ENCODE measurements at regions of chr10 and their contacts with region 1.

Region 1: GRCh38 chr10:94320285-94320914 is 42.3 kb downstream of the NOC3L start:
- DNase-seq: peak; percentile 75
- ATAC-seq: peak; percentile 69
- H3K4me3 Mint-ChIP-seq: no peak overlapping the region
- H3K27ac Mint-ChIP-seq: no peak overlapping the region
- H3K4me1 Mint-ChIP-seq: no peaks in the 10 kb centered on the region
- H3K27me3 Mint-ChIP-seq: no peaks in the 10 kb centered on the region

Region 2: GRCh38 chr10:93916257-93917063 is 403.9 kb before region 1 on chr10:
- CTCF ChIA-PET with region 1: interaction called, 13 read pairs
- POLR2A ChIA-PET with region 1: no interaction called
- DNase-seq: no peak
- ATAC-seq: no peak
- H3K4me3 Mint-ChIP-seq: no peak overlapping the region
- H3K27ac Mint-ChIP-seq: no peak overlapping the region
- H3K4me1 Mint-ChIP-seq: no peaks in the 10 kb centered on the region
- H3K27me3 Mint-ChIP-seq: no peaks in the 10 kb centered on the region

Region 3: DNA sequence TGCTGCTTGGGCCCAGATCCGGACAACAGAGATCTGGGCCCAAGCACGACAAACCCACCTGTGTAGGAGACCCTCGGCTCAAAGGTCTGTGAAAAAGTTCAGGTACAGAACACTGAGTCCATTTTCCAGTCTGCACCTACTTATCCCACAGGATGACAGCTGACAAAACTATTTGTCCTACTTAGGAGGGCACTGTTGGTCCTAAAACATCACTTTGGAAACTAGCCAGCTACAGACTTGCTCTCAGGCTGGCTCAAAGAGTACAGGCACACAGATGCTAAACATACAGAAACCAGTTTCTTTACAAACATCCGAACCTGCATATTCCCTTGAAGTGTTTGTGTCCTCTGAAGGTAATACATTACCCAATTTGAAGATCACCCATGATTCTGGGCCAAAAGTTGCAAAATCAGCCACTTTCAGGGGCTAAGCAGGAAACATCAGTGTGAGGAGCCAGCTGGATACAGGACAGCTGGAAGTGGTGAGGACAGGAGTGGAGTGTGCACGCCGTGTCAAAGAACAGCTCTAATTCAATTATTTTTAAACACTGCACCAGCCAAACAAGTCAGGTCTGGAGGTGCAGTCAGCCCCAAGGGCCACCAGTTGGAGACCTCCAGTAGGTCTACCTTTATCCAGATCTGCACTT is 46.1 kb before region 1 on chr10:
- CTCF ChIA-PET with region 1: interaction called, 23 read pairs
- POLR2A ChIA-PET with region 1: no interaction called
- DNase-seq: no peak
- ATAC-seq: no peak
- H3K4me3 Mint-ChIP-seq: no peak overlapping the region
- H3K27ac Mint-ChIP-seq: no peak overlapping the region
- H3K4me1 Mint-ChIP-seq: no peaks in the 10 kb centered on the region
- H3K27me3 Mint-ChIP-seq: peaks cover 4% of the 10 kb centered on the region

Region 4: GRCh38 chr10:94279835-94280709 is 40.3 kb before region 1 on chr10:
- CTCF ChIA-PET with region 1: interaction called, 23 read pairs
- POLR2A ChIA-PET with region 1: no interaction called
- DNase-seq: peak; percentile 66
- ATAC-seq: peak; percentile 82
- H3K4me3 Mint-ChIP-seq: no peak overlapping the region
- H3K27ac Mint-ChIP-seq: no peak overlapping the region
- H3K4me1 Mint-ChIP-seq: no peaks in the 10 kb centered on the region
- H3K27me3 Mint-ChIP-seq: peaks cover 24% of the 10 kb centered on the region

Region 5: GRCh38 chr10:94310369-94310768 is 10.0 kb before region 1 on chr10:
- CTCF ChIA-PET with region 1: interaction called, 20 read pairs
- POLR2A ChIA-PET with region 1: no interaction called
- DNase-seq: no peak
- ATAC-seq: no peak
- H3K4me3 Mint-ChIP-seq: no peak overlapping the region
- H3K27ac Mint-ChIP-seq: no peak overlapping the region
- H3K4me1 Mint-ChIP-seq: peaks cover 2% of the 10 kb centered on the region
- H3K27me3 Mint-ChIP-seq: peaks cover 18% of the 10 kb centered on the region

Region 6: DNA sequence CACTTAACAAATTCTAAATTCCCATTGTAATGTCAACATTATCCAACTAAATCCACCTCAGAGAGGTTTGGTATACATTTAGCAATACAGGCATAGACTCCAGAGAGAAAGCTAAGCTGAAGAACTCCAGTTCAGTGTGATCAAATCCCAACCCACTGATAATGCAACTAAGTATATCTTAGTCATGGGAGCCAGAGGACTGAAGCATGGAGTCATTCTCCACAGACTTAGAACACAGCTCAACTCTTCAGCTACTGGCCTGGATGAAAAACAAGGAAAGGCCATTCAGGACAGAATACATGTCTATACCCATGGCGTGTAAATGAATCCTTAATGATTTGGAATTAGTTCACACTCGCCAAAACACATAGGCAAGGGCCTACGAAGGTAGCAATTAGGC is 14.5 kb after region 1 on chr10:
- CTCF ChIA-PET with region 1: interaction called, 36 read pairs
- POLR2A ChIA-PET with region 1: no interaction called
- DNase-seq: no peak
- ATAC-seq: no peak
- H3K4me3 Mint-ChIP-seq: no peak overlapping the region
- H3K27ac Mint-ChIP-seq: no peak overlapping the region
- H3K4me1 Mint-ChIP-seq: no peaks in the 10 kb centered on the region
- H3K27me3 Mint-ChIP-seq: no peaks in the 10 kb centered on the region

Region 7: DNA sequence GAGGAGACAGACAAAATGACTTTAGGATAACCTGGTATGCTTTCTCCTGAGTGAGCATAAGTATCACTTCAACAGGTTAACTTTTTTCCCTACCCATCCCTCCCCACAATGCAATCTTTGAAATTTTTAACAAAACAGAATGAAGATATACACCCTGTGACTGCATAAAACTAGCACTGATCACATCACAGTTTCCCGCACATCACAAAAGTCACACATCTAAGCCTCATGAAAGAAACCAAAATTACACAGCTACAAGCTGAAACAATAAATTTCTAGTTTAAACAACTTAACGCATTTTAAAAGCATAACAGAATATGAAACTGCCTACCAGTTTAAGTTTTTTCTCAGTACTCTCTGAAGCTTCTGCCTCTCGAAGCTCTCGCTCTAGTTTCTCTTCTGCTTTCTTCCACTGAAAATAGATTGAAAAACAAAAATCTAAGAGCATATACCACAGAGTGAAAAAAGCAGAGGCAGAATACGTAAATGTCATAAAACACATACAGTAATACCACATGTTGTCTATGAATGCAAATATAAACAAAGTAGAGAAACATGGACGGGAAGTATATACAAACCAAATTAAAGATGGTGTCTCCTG is 24.2 kb after region 1 on chr10:
- CTCF ChIA-PET with region 1: interaction called, 11 read pairs
- POLR2A ChIA-PET with region 1: no interaction called
- DNase-seq: no peak
- ATAC-seq: no peak
- H3K4me3 Mint-ChIP-seq: no peak overlapping the region
- H3K27ac Mint-ChIP-seq: no peak overlapping the region
- H3K4me1 Mint-ChIP-seq: peaks cover 2% of the 10 kb centered on the region
- H3K27me3 Mint-ChIP-seq: no peaks in the 10 kb centered on the region